Naive thymus-derived CD4-positive, alpha-beta T cell (primary cell): ENCODE measurements at regions of chr6 and their contacts with region 1.

Region 1: GRCh38 chr6:69796642-69797390 is at the start of gene LMBRD1:
- DNase-seq: peak; percentile 98 to 100 (median 99)
- ATAC-seq: peak; percentile 95
- H3K4me3 ChIP-seq: peak within 1 kb of the TSS; percentile 62
- H3K4me3 Mint-ChIP-seq: peak within 1 kb of the TSS; percentile 89 to 99 (median 96)
- H3K27ac ChIP-seq: peak within 1 kb of the TSS; percentile 96
- H3K27ac Mint-ChIP-seq: peak within 1 kb of the TSS; percentile 89 to 100 (median 97)
- H3K4me1 ChIP-seq: peaks cover 9 to 13% of the 10 kb centered on the region in 2 donors
- H3K4me1 Mint-ChIP-seq: peaks cover 27 to 60% (median 50%) of the 10 kb centered on the region in 7 donors
- H3K27me3 ChIP-seq: no peaks in the 10 kb centered on the region
- H3K27me3 Mint-ChIP-seq: no peaks in the 10 kb centered on the region
- total RNA-seq, gene LMBRD1: 27.4 to 49.1 (median 41.7) TPM

Region 2: DNA sequence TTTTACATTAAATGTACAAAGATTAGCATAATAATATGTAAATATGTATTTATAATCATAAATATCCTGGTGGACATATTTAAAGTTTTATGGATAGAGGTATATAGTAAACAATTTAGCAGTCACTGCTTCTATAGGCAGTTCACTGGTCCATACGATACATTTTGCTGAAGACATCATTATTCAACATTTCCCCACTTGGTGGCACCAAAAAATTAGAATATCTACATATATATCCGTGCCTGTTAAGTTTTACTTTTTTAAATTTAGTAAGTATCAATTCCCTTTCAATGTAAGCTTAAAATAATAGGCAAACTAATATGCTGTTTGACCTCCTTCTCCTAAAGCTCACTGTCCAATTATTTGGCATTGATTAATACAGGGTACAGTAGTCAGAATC is 64.2 kb before region 1 on chr6:
- CTCF ChIA-PET with region 1: interaction called, 3 read pairs
- POLR2A ChIA-PET with region 1: no interaction called
- intact Hi-C with region 1: loop called in 1 of 2 experiments (anchors 1 kb)
- DNase-seq: peak in 5 of 9 donors; percentile 3 to 25 (median 10)
- ATAC-seq: no peak
- H3K4me3 ChIP-seq: no peak overlapping the region
- H3K4me3 Mint-ChIP-seq: no peak overlapping the region
- H3K27ac ChIP-seq: no peak overlapping the region
- H3K27ac Mint-ChIP-seq: no peak overlapping the region
- H3K4me1 ChIP-seq: no peaks in the 10 kb centered on the region
- H3K4me1 Mint-ChIP-seq: peaks cover 0 to 9% (median 6%) of the 10 kb centered on the region in 7 donors
- H3K27me3 ChIP-seq: no peaks in the 10 kb centered on the region
- H3K27me3 Mint-ChIP-seq: no peaks in the 10 kb centered on the region

Region 3: DNA sequence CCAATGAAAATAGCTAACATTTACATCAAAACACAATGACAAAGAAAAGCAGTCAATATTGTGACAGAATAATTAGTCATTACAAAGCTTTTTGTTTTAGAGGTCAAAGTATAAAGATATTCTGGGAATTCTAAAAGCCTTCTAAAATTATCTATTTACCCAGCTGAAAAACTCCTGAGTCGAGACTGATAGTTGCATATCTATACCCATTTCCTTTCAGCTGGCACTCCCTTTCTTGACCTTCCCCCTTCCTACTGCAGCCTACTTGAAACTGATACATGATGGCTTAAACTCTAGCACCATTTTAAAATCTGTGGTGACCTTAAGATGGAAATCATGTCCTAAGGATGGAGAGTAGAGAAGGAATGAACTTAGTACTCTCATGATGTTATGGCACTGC is 38.6 kb before region 1 on chr6:
- CTCF ChIA-PET with region 1: no interaction called
- POLR2A ChIA-PET with region 1: no interaction called
- intact Hi-C with region 1: no loop called
- DNase-seq: no peak
- ATAC-seq: no peak
- H3K4me3 ChIP-seq: no peak overlapping the region
- H3K4me3 Mint-ChIP-seq: peak overlapping the region in 2 of 10 donors; percentile 27 to 28
- H3K27ac ChIP-seq: no peak overlapping the region
- H3K27ac Mint-ChIP-seq: peak overlapping the region in 1 of 9 donors; percentile 16
- H3K4me1 ChIP-seq: no peaks in the 10 kb centered on the region
- H3K4me1 Mint-ChIP-seq: peaks cover 2 to 78% (median 68%) of the 10 kb centered on the region in 7 donors
- H3K27me3 ChIP-seq: no peaks in the 10 kb centered on the region
- H3K27me3 Mint-ChIP-seq: no peaks in the 10 kb centered on the region

Region 4: GRCh38 chr6:69813508-69813907 is 16.7 kb after region 1 on chr6:
- CTCF ChIA-PET with region 1: interaction called, 16 read pairs
- POLR2A ChIA-PET with region 1: interaction called, 76 read pairs
- intact Hi-C with region 1: loop called (anchors 1 kb)
- DNase-seq: peak in 1 of 9 donors; percentile 15
- ATAC-seq: peak; percentile 79
- H3K4me3 ChIP-seq: peak overlapping the region; percentile 14
- H3K4me3 Mint-ChIP-seq: peak overlapping the region; percentile 25 to 74 (median 62)
- H3K27ac ChIP-seq: peak overlapping the region; percentile 65
- H3K27ac Mint-ChIP-seq: peak overlapping the region; percentile 71 to 98 (median 87)
- H3K4me1 ChIP-seq: peaks cover 26 to 49% of the 10 kb centered on the region in 2 donors
- H3K4me1 Mint-ChIP-seq: peaks cover 35 to 71% (median 59%) of the 10 kb centered on the region in 7 donors
- H3K27me3 ChIP-seq: no peaks in the 10 kb centered on the region
- H3K27me3 Mint-ChIP-seq: no peaks in the 10 kb centered on the region

Region 5: GRCh38 chr6:69866770-69867638 is 70.2 kb after region 1 on chr6:
- CTCF ChIA-PET with region 1: interaction called, 5 read pairs
- POLR2A ChIA-PET with region 1: interaction called, 5 read pairs
- intact Hi-C with region 1: loop called (anchors 1 kb)
- DNase-seq: peak; percentile 42 to 64 (median 55)
- ATAC-seq: peak; percentile 84
- H3K4me3 ChIP-seq: peak overlapping the region; percentile 55
- H3K4me3 Mint-ChIP-seq: peak overlapping the region; percentile 79 to 98 (median 89)
- H3K27ac ChIP-seq: peak overlapping the region; percentile 4
- H3K27ac Mint-ChIP-seq: peak overlapping the region in 7 of 9 donors; percentile 15 to 85 (median 51)
- H3K4me1 ChIP-seq: peaks cover 5 to 6% of the 10 kb centered on the region in 2 donors
- H3K4me1 Mint-ChIP-seq: peaks cover 15 to 24% (median 20%) of the 10 kb centered on the region in 7 donors
- H3K27me3 ChIP-seq: no peaks in the 10 kb centered on the region
- H3K27me3 Mint-ChIP-seq: peaks cover 8 to 66% (median 34%) of the 10 kb centered on the region in 5 donors

Region 6: DNA sequence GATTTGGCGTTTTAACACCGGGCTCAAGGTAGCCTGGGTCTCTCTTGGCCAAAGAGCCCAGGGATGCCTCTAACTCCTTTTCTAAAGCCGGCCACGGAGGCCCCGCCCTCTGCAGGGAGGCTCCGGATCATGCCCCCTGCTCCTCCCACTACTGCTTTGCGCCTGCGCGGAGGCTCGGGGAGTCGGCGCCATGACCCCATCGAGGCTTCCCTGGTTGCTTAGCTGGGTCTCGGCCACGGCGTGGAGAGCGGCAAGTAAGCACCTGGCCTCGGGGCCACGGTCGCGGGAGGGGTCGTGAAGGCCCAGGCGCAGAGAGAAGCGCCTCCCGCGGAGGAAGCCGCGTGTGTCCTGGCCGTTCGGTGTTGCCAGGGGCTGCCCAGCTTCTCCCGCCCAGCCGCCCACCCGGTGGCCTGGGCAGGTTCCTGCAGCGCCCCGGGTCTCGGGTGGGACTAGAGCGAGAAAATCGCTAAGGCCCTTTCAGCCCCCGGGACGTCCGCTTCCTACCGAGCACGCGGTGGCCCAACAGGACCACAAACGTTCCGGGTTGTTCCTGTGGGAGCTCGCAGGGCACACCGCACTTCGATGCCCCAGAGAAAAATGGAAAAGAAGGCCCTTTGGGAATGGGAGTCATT is 770.1 kb after region 1 on chr6 and contains the start of gene SDHAF4:
- CTCF ChIA-PET with region 1: no interaction called
- POLR2A ChIA-PET with region 1: no interaction called
- intact Hi-C with region 1: loop called in 1 of 2 experiments (anchors 2 kb)
- DNase-seq: peak; percentile 89 to 96 (median 94)
- ATAC-seq: peak; percentile 100
- H3K4me3 ChIP-seq: peak within 1 kb of the TSS; percentile 88
- H3K4me3 Mint-ChIP-seq: peak within 1 kb of the TSS; percentile 83 to 91 (median 87)
- H3K27ac ChIP-seq: peak within 1 kb of the TSS; percentile 81
- H3K27ac Mint-ChIP-seq: peak within 1 kb of the TSS; percentile 76 to 95 (median 91)
- H3K4me1 ChIP-seq: peaks cover 6 to 8% of the 10 kb centered on the region in 2 donors
- H3K4me1 Mint-ChIP-seq: peaks cover 5 to 32% (median 22%) of the 10 kb centered on the region in 7 donors
- H3K27me3 ChIP-seq: no peaks in the 10 kb centered on the region
- H3K27me3 Mint-ChIP-seq: peaks cover 0 to 2% (median 0%) of the 10 kb centered on the region in 5 donors
- total RNA-seq, gene SDHAF4: 4.7 to 14.5 (median 10.3) TPM

Region 7: GRCh38 chr6:71288228-71289001 is 1491.6 kb after region 1 on chr6 and contains the start of gene OGFRL1:
- CTCF ChIA-PET with region 1: no interaction called
- POLR2A ChIA-PET with region 1: no interaction called
- intact Hi-C with region 1: loop called in 1 of 2 experiments (anchors 2 kb)
- DNase-seq: peak; percentile 45 to 74 (median 64)
- ATAC-seq: peak; percentile 94
- H3K4me3 ChIP-seq: peak within 1 kb of the TSS; percentile 68
- H3K4me3 Mint-ChIP-seq: peak within 1 kb of the TSS; percentile 76 to 88 (median 83)
- H3K27ac ChIP-seq: peak within 1 kb of the TSS; percentile 70
- H3K27ac Mint-ChIP-seq: peak within 1 kb of the TSS; percentile 78 to 93 (median 83)
- H3K4me1 ChIP-seq: peaks cover 5 to 26% of the 10 kb centered on the region in 2 donors
- H3K4me1 Mint-ChIP-seq: peaks cover 29 to 43% (median 35%) of the 10 kb centered on the region in 7 donors
- H3K27me3 ChIP-seq: no peaks in the 10 kb centered on the region
- H3K27me3 Mint-ChIP-seq: peaks cover 0 to 24% (median 0%) of the 10 kb centered on the region in 5 donors
- total RNA-seq, gene OGFRL1: 4.3 to 30.4 (median 4.7) TPM